HCT116 (cell line): ENCODE measurements at regions of chr14 and their contacts with region 1.

Region 1: GRCh38 chr14:53285805-53286204 is 132.7 kb upstream of the DDHD1 start:
- DNase-seq: no peak
- ATAC-seq: no peak
- H3K4me3 ChIP-seq: no peak overlapping the region
- H3K27ac ChIP-seq: no peak overlapping the region
- H3K4me1 ChIP-seq: no peaks in the 10 kb centered on the region
- H3K27me3 ChIP-seq: no peaks in the 10 kb centered on the region
- CTCF ChIP-seq: no peak
- POLR2A ChIP-seq: no peak
- RAD21 ChIP-seq: no peak

Region 2: DNA sequence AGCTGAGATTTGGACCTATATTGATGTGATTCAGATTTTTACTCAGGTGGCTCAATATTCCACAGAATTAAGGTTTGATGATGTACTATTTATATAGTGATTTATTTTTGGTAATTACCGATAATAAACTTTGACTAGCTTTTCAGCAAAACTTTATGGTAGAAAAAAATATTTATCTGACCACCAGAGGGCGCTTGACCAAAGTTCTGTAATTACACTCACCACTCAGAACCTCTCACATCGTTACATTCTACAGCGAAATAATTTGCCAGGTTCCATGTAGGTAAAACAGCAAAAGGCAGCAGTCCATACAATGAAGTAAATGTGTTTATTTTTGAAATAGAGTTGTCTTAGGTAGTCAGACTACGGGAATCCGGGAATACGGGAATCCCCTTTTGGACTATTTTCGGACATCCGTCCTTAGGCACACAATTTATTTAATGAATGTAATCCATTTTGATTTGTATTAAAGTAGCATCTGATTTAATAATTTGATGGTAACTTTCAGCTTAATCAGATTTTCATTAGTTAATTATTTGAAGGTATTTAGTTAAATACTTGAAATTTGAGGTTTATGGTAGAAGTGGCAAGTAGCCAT is 10.3 kb after region 1 on chr14:
- CTCF ChIA-PET with region 1: interaction called, 11 read pairs
- POLR2A ChIA-PET with region 1: no interaction called
- RAD21 ChIA-PET with region 1: no interaction called
- intact Hi-C with region 1: no loop called
- DNase-seq: peak; percentile 23
- ATAC-seq: peak; percentile 46
- H3K4me3 ChIP-seq: no peak overlapping the region
- H3K27ac ChIP-seq: no peak overlapping the region
- H3K4me1 ChIP-seq: no peaks in the 10 kb centered on the region
- H3K27me3 ChIP-seq: no peaks in the 10 kb centered on the region
- CTCF ChIP-seq: peak; percentile 39 to 78 (median 40); a peak in 5 of 6 replicates
- POLR2A ChIP-seq: no peak
- RAD21 ChIP-seq: peak; percentile 42

Region 3: DNA sequence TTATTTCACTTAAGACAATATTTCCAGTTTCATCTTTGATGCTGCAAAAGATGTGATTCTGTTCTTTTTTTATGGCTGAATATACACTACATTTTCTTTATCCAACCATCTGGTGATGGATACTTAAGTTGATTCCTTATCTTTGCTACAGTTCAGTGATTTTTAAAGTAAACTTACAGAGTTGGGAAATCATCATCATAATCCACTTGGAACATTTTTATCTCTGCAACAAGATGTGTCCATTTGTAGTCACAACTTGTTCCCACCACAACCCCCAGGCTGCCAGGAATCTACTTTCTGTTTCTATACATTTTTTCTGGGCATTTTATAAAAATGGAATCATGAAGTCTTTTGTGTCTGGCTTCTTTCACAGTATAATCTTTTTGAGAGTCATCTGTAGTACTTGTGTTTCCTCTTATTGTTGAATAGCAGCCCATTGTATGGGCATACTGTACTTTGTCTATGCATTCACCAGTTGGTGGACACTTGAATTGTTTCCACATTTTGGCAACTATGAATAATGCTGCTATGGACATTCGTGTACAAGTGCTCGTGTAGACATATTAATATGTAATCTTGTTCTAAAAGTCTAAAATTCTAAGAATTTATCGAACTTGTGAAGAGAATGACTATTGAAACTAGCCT is 79.8 kb after region 1 on chr14:
- CTCF ChIA-PET with region 1: no interaction called
- POLR2A ChIA-PET with region 1: no interaction called
- RAD21 ChIA-PET with region 1: no interaction called
- intact Hi-C with region 1: no loop called
- DNase-seq: no peak
- ATAC-seq: no peak
- H3K4me3 ChIP-seq: no peak overlapping the region
- H3K27ac ChIP-seq: no peak overlapping the region
- H3K4me1 ChIP-seq: peaks cover 14 to 18% of the 10 kb centered on the region in 2 experiments
- H3K27me3 ChIP-seq: no peaks in the 10 kb centered on the region
- CTCF ChIP-seq: no peak
- POLR2A ChIP-seq: no peak
- RAD21 ChIP-seq: no peak